Prostate gland (tissue), 2 donors: ENCODE measurements at regions of chr6 and their contacts with region 1.

Region 1: DNA sequence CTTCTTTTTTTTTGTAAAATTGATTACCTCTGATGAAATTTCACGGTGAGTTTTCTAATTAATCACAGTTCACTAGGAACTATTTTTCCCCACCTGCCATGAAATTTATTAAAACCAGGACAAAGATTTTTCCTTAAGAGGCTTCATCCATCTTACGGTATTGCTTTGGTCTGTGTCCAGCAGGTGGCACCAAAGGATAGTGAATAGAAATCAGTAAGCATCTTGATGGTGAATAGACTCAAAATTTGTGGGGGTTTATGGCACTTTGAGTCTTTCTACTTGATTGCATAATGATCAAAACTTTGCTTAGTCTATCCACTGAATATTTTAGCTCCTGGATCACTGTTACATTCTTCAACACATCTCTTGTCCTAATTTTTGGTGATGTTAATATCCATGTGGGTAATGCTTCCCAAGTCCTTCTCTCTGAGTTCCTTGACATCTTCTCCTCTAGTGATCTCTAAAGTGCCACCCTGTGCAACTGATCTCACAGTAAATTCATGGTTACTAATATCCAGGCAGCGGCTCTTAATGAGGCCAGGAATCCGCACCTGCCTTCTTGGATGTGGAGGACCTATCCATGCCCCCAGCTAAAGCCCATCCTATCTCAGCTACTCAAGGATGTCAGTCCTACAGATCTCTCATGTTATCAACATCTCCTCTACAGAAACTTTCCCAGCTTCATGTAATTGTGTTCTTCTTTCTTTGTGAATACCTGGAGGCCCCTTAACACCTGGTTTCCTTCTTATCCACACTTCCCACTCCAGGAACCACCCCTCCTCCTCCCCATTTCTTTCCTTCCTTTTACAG is 54.5 kb downstream of the STMND1 start:
- DNase-seq: peak; percentile 80
- H3K4me3 ChIP-seq: no peak overlapping the region
- H3K27ac ChIP-seq: no peak overlapping the region
- H3K4me1 ChIP-seq: peaks cover 2% of the 10 kb centered on the region
- H3K27me3 ChIP-seq: no peaks in the 10 kb centered on the region
- CTCF ChIP-seq: peak; percentile 58 to 87 (median 84)
- POLR2A ChIP-seq: no peak

Region 2: GRCh38 chr6:17469006-17469832 is 312.9 kb after region 1 on chr6:
- intact Hi-C with region 1: loop called (anchors 10 kb)
- DNase-seq: no peak
- H3K4me3 ChIP-seq: no peak overlapping the region
- H3K27ac ChIP-seq: peak overlapping the region in 1 of 2 donors; percentile 28
- H3K4me1 ChIP-seq: no peaks in the 10 kb centered on the region
- H3K27me3 ChIP-seq: no peaks in the 10 kb centered on the region
- CTCF ChIP-seq: peak in 3 of 4 experiments; percentile 31 to 60 (median 32)
- POLR2A ChIP-seq: no peak

Region 3: DNA sequence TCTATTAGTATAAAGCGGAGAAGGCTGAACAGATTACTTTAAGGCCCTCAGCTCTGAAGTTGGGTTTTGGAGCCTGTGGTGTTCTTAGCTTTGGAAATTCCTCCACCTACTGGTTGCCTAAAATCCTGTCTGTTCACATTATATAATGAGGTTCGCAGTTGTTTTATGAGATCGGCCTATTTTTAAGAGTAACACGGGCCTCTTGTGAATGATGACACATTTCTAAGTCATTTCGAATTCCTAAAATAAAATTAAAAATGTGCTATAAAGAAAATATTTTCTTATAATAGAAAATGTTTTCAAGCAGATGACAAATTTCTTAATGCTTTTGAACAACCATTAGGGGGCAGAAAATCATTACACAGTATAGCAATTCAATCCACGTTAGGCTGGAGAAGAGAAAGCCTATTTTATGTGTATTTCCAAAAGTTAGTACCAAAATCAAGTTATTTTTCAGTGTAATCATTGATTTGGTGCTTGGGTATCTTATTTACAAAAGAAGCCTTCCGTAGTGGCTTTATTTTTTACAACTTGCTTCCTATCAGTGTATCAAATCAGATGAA is 428.0 kb after region 1 on chr6:
- intact Hi-C with region 1: loop called (anchors 1 kb)
- DNase-seq: peak; percentile 55
- H3K4me3 ChIP-seq: no peak overlapping the region
- H3K27ac ChIP-seq: peak overlapping the region; percentile 31 to 50
- H3K4me1 ChIP-seq: no peaks in the 10 kb centered on the region
- H3K27me3 ChIP-seq: no peaks in the 10 kb centered on the region
- CTCF ChIP-seq: peak; percentile 83 to 93 (median 86)
- POLR2A ChIP-seq: no peak

Region 4: GRCh38 chr6:17803409-17803808 is 647.1 kb after region 1 on chr6:
- intact Hi-C with region 1: loop called (anchors 5 kb)
- DNase-seq: no peak
- H3K4me3 ChIP-seq: no peak overlapping the region
- H3K27ac ChIP-seq: no peak overlapping the region
- H3K4me1 ChIP-seq: no peaks in the 10 kb centered on the region
- H3K27me3 ChIP-seq: no peaks in the 10 kb centered on the region
- CTCF ChIP-seq: no peak
- POLR2A ChIP-seq: no peak